ENCODE measurements at regions of chr11 and their contacts with region 1.

Region 1: DNA sequence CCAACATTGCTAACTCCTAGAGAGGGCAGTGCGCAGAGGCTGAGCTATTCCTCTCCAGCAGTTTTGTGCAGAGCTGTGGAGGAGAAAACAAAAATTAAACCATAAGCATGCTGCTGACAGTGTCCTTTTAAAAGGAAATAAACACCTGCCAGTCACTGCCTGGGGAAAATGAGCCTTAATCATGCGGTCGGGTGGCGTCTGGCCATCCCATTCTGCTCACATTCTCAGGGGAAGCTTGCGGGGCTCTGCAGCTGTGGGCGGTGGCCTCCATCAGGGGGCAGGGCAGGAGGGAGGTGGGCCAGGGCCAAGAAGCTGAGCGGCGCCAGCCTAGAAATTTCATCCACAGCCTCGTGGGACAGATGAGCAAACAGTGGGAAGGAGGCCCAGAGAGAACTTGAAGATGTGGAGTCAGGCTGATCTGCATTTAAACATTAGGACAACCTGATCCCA is 71.0 kb upstream of the TP53I11 start:
- DNase-seq: peak; percentile 24
- H3K4me3 ChIP-seq: no peak overlapping the region
- H3K27ac ChIP-seq: peak overlapping the region in 2 of 4 donors; percentile 24 to 35
- H3K4me1 ChIP-seq: peaks cover 0 to 15% (median 0%) of the 10 kb centered on the region in 4 donors
- H3K27me3 ChIP-seq: no peaks in the 10 kb centered on the region
- CTCF ChIP-seq: no peak
- EP300 ChIP-seq: no peak
- POLR2A ChIP-seq: no peak

Region 2: GRCh38 chr11:45073685-45074141 is 52.0 kb after region 1 on chr11:
- in situ Hi-C with region 1: loop called in 1 of 4 experiments (anchors 5 kb)
- intact Hi-C with region 1: no loop called
- DNase-seq: no peak
- H3K4me3 ChIP-seq: no peak overlapping the region
- H3K27ac ChIP-seq: no peak overlapping the region
- H3K4me1 ChIP-seq: peaks cover 0 to 5% (median 1%) of the 10 kb centered on the region in 4 donors
- H3K27me3 ChIP-seq: no peaks in the 10 kb centered on the region
- CTCF ChIP-seq: no peak
- EP300 ChIP-seq: no peak
- POLR2A ChIP-seq: no peak